Esophagus muscularis mucosa (tissue), 4 donors: ENCODE measurements at regions of chr21 and their contacts with region 1.

Region 1: GRCh38 chr21:43728467-43729390 is 9.8 kb downstream of the PDXK start:
- DNase-seq: peak; percentile 97
- H3K4me3 ChIP-seq: peak overlapping the region; percentile 53 to 71 (median 58)
- H3K27ac ChIP-seq: peak overlapping the region; percentile 80 to 89 (median 84)
- H3K4me1 ChIP-seq: peaks cover 57 to 79% (median 74%) of the 10 kb centered on the region in 4 donors
- H3K27me3 ChIP-seq: no peaks in the 10 kb centered on the region
- CTCF ChIP-seq: peak; percentile 29 to 55 (median 46)
- EP300 ChIP-seq: no peak
- POLR2A ChIP-seq: peak; percentile 38

Region 2: GRCh38 chr21:43659136-43660000 is 69.4 kb before region 1 on chr21 and contains the starts of genes HSF2BP and RRP1B:
- intact Hi-C with region 1: no loop called
- DNase-seq: no peak
- H3K4me3 ChIP-seq: peak within 1 kb of the TSS; percentile 93 to 98 (median 95)
- H3K27ac ChIP-seq: peak within 1 kb of the TSS; percentile 85 to 95 (median 92)
- H3K4me1 ChIP-seq: peaks cover 19 to 39% (median 33%) of the 10 kb centered on the region in 4 donors
- H3K27me3 ChIP-seq: no peaks in the 10 kb centered on the region
- CTCF ChIP-seq: peak; percentile 6 to 44 (median 11)
- EP300 ChIP-seq: no peak
- POLR2A ChIP-seq: no peak
- total RNA-seq, gene HSF2BP: 0.63 to 1.2 (median 0.66) TPM in 3 of 4 donors, not detected in the other
- total RNA-seq, gene RRP1B: 17.4 to 22.0 (median 20.8) TPM

Region 3: GRCh38 chr21:43775795-43776430 is 47.2 kb after region 1 on chr21 and contains the start of gene CSTB:
- intact Hi-C with region 1: loop called (anchors 5 kb)
- DNase-seq: peak; percentile 95
- H3K4me3 ChIP-seq: peak within 1 kb of the TSS; percentile 70 to 99 (median 84)
- H3K27ac ChIP-seq: peak within 1 kb of the TSS; percentile 80 to 92 (median 89)
- H3K4me1 ChIP-seq: peaks cover 13 to 21% (median 20%) of the 10 kb centered on the region in 4 donors
- H3K27me3 ChIP-seq: no peaks in the 10 kb centered on the region
- CTCF ChIP-seq: no peak
- EP300 ChIP-seq: no peak
- POLR2A ChIP-seq: peak; percentile 44
- total RNA-seq, gene CSTB: 5.0 to 21.1 (median 8.1) TPM